ENCODE measurements at regions of chr14 and their contacts with region 1.

Region 1: GRCh38 chr14:52299692-52300278 is 14.3 kb upstream of the PTGER2 start:
- DNase-seq: no peak
- ATAC-seq: no peak

Region 2: DNA sequence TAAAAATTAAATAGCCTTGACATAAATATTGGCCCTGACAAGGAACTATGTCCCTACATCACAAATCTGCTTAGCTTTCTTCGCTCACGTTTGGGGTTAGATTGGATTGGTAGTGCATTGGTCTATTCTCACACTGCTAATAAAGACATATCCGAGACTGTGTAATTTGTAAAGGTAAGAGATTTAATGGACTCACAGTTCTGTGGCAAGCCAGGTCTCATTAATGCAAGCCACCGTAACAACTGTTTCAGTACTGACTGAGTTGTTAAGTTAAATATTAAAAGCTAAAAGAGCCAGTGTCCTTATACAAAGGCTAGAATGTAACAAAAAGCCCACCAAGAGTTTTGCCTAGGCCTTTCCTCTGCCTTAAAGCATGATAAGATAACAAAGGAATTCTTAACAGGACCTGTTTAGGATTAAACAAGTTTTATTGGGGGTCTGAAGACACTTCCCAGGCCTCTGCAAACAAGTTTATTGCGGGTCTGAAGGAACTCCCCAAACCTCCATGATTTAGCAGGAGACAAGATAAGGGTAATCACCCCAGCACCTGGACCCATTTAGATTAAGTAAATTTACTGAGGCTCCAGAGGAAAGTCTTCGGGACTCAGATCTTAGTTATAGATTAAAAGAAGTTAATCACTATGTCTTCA is 120.5 kb before region 1 on chr14:
- intact Hi-C with region 1: no loop called
- DNase-seq: no peak
- ATAC-seq: no peak

Region 3: GRCh38 chr14:52325126-52325525 is 25.3 kb after region 1 on chr14:
- intact Hi-C with region 1: no loop called
- DNase-seq: no peak
- ATAC-seq: peak; percentile 67

Region 4: GRCh38 chr14:52473557-52473956 is 173.8 kb after region 1 on chr14:
- intact Hi-C with region 1: loop called (anchors 5 kb)
- DNase-seq: no peak
- ATAC-seq: no peak